ENCODE measurements at regions of chr6 and their contacts with region 1.

Region 1: GRCh38 chr6:137641474-137642077 is 147.4 kb upstream of the OLIG3 start:
- DNase-seq: peak; percentile 71
- H3K4me3 Mint-ChIP-seq: no peak overlapping the region
- H3K27ac Mint-ChIP-seq: no peak overlapping the region
- H3K4me1 Mint-ChIP-seq: peaks cover 13% of the 10 kb centered on the region
- H3K27me3 Mint-ChIP-seq: peaks cover 4% of the 10 kb centered on the region

Region 2: GRCh38 chr6:137076277-137077068 is 565.1 kb before region 1 on chr6:
- CTCF ChIA-PET with region 1: interaction called, 3 read pairs
- POLR2A ChIA-PET with region 1: no interaction called
- intact Hi-C with region 1: loop called (anchors 1 kb)
- DNase-seq: peak; percentile 76
- H3K4me3 Mint-ChIP-seq: no peak overlapping the region
- H3K27ac Mint-ChIP-seq: no peak overlapping the region
- H3K4me1 Mint-ChIP-seq: no peaks in the 10 kb centered on the region
- H3K27me3 Mint-ChIP-seq: peaks cover 17% of the 10 kb centered on the region

Region 3: DNA sequence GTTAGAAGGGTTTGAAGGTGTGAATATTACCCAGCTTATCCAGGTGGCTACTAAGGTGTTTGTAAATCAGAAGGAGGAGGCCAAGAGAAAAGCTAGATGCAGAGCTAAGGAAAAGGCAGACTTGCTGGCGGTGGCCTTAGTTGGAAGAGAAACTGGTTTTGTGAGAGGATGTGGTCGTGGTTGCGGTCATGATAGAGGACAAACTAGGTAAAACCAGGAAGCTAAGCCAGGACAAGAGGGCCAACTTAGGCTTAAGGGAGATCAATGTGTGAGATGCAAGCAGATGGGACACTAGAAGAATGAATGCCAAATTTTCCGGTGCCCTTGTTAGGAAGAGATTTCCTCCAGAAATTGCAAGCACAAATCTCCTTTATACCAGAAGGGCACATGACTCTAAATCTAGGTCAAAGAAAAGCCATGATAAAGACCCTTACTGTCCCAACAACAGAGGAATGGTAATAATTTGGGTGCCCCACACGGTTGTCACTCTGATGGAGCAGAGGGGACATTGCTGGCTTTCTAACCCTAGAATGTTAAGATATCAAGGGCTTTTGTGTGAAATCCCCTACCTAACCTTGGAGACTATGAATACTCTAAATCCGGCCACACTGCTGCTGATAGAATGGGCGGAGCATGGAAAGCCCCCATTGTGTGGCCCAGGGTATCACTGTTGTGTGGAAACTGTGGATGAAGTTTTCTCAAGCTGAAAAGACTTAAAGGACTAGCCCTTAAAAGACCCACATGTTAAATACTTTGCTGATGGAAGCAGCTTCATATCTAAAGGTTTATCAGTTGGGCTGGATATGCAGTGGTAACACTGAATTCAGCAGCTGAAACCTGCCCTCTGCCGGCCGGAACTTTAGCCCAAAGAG is 476.0 kb before region 1 on chr6:
- CTCF ChIA-PET with region 1: no interaction called
- POLR2A ChIA-PET with region 1: no interaction called
- intact Hi-C with region 1: loop called (anchors 10 kb)
- DNase-seq: peak; percentile 69
- H3K4me3 Mint-ChIP-seq: no peak overlapping the region
- H3K27ac Mint-ChIP-seq: no peak overlapping the region
- H3K4me1 Mint-ChIP-seq: peaks cover 32% of the 10 kb centered on the region
- H3K27me3 Mint-ChIP-seq: peaks cover 34% of the 10 kb centered on the region

Region 4: GRCh38 chr6:137341681-137342195 is 299.8 kb before region 1 on chr6:
- CTCF ChIA-PET with region 1: interaction called, 3 read pairs
- POLR2A ChIA-PET with region 1: no interaction called
- intact Hi-C with region 1: loop called (anchors 1 kb)
- DNase-seq: peak; percentile 66
- H3K4me3 Mint-ChIP-seq: peak overlapping the region; percentile 11
- H3K27ac Mint-ChIP-seq: no peak overlapping the region
- H3K4me1 Mint-ChIP-seq: peaks cover 13% of the 10 kb centered on the region
- H3K27me3 Mint-ChIP-seq: peaks cover 4% of the 10 kb centered on the region

Region 5: GRCh38 chr6:137475103-137475502 is 166.5 kb before region 1 on chr6:
- CTCF ChIA-PET with region 1: interaction called, 4 read pairs
- POLR2A ChIA-PET with region 1: no interaction called
- intact Hi-C with region 1: loop called (anchors 1 kb)
- DNase-seq: no peak
- H3K4me3 Mint-ChIP-seq: no peak overlapping the region
- H3K27ac Mint-ChIP-seq: no peak overlapping the region
- H3K4me1 Mint-ChIP-seq: no peaks in the 10 kb centered on the region
- H3K27me3 Mint-ChIP-seq: peaks cover 8% of the 10 kb centered on the region

Region 6: DNA sequence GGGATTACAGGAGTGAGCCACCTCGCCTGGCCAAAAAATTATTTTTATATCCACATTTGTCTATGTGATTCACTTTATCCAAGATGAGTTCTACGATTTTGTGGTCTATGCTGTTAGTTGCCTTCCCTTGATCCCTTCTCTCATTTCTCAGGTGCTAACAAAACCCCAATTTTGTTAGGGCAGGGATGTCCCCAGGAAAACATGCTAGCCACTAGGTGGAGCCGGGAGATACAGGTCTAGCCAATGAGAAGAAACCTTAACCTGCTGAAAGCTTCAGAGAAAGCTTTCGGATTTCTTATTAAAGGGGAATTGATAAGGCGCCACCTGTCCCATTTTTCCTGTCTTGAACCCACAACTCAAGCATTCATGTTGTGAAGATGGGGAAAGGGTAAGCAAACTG is 20.0 kb after region 1 on chr6:
- CTCF ChIA-PET with region 1: interaction called, 3 read pairs
- POLR2A ChIA-PET with region 1: no interaction called
- intact Hi-C with region 1: loop called (anchors 1 kb)
- DNase-seq: peak; percentile 58
- H3K4me3 Mint-ChIP-seq: no peak overlapping the region
- H3K27ac Mint-ChIP-seq: no peak overlapping the region
- H3K4me1 Mint-ChIP-seq: peaks cover 24% of the 10 kb centered on the region
- H3K27me3 Mint-ChIP-seq: peaks cover 8% of the 10 kb centered on the region

Region 7: DNA sequence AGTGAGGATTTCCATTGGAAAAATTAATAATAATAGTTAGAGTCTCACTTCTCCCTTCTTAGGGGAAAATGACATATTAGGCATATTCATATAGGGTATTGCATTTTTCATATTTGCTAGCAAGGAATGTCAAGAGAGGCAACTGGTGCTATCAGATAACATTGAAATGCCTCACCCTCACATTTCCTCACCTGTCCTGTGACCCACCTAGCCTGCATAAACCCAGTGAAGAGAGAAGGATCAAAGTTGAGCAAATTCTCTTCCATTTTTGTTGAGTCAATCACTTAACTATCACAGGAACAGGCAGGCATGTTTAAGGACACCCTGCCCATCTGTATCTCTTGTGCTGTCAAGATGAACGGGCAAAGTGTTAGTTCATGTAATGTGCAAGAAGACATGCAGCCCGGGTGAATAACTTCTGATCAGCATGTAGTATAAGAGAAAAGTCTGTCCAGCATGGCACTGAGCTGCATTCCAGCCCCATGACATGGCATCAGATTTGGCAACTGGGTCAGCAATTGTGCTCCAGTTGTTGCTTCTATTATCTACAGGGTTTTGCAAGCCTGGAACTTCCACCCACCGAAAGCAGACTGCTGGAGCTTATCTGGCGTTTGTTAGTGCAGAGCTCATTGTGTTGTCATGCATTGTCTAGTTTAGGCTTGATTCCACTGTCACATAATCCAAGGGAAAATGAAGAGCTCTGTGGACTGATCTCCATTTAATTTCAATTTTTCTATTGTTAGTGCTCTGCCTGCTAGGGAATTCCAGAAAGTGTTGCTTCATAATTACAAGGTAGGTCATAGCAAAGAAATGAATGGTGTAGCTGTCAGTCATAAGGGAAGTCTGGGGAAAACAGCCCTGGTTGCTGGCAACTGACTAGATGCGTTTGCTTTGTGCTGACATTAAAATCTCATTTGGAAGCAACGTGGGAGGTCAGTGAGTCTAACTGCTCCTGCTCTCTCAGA is 87.1 kb after region 1 on chr6:
- CTCF ChIA-PET with region 1: no interaction called
- POLR2A ChIA-PET with region 1: no interaction called
- intact Hi-C with region 1: no loop called
- DNase-seq: no peak
- H3K4me3 Mint-ChIP-seq: no peak overlapping the region
- H3K27ac Mint-ChIP-seq: no peak overlapping the region
- H3K4me1 Mint-ChIP-seq: no peaks in the 10 kb centered on the region
- H3K27me3 Mint-ChIP-seq: peaks cover 11% of the 10 kb centered on the region